ENCODE measurements at regions of chr9 and their contacts with region 1.

Region 1: GRCh38 chr9:127545196-127546124 is 66.6 kb upstream of the STXBP1 start:
- DNase-seq: peak; percentile 89
- H3K4me3 ChIP-seq: no peak overlapping the region
- H3K27ac ChIP-seq: peak overlapping the region; percentile 63
- H3K4me1 ChIP-seq: peaks cover 65% of the 10 kb centered on the region
- H3K27me3 ChIP-seq: no peaks in the 10 kb centered on the region
- CTCF ChIP-seq: no peak

Region 2: GRCh38 chr9:127528422-127529084 is 16.9 kb before region 1 on chr9:
- CTCF ChIA-PET with region 1: no interaction called
- dilution Hi-C with region 1: no loop called
- in situ Hi-C with region 1: no loop called
- intact Hi-C with region 1: no loop called
- DNase-seq: no peak
- H3K4me3 ChIP-seq: no peak overlapping the region
- H3K27ac ChIP-seq: no peak overlapping the region
- H3K4me1 ChIP-seq: peaks cover 16% of the 10 kb centered on the region
- H3K27me3 ChIP-seq: no peaks in the 10 kb centered on the region
- CTCF ChIP-seq: no peak

Region 3: DNA sequence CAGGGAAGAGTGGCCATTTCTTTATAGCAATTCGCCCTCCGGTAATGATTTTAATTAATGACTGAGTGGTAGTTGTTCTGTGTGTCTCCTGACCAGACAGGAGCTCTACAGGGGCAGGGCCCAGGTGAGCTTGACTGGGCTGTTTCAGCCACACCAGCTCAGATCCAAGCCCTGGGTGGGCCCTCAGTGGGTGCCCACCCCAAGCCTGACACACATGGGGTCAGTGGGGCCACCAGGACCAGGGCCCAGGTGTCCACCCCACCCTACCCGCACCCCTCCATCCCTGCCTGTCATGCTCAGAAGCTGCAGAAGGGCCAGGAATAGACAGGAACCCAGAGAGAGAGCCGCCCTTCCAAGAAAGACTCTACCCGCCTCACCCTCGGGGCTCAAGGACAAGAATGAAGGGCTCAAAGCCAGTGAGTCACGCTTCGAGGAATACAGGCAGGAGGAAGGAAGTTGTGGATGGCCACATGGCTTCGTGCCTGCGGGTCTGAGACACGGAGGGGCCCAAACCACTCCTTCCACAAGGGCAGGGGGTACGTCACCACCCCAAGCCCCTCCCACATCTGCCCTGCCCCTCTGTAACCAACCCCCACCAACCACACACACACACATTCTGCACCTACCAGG is 10.4 kb after region 1 on chr9:
- CTCF ChIA-PET with region 1: interaction called, 4 read pairs
- dilution Hi-C with region 1: no loop called
- in situ Hi-C with region 1: no loop called
- intact Hi-C with region 1: loop called (anchors 1 kb)
- DNase-seq: peak; percentile 94
- H3K4me3 ChIP-seq: peak overlapping the region in 1 of 3 experiments; percentile 1
- H3K27ac ChIP-seq: peak overlapping the region; percentile 67
- H3K4me1 ChIP-seq: peaks cover 68% of the 10 kb centered on the region
- H3K27me3 ChIP-seq: no peaks in the 10 kb centered on the region
- CTCF ChIP-seq: no peak

Measured in mammary epithelial cell (primary cell).